ENCODE measurements at regions of chr12 and their contacts with region 1.

Region 1: DNA sequence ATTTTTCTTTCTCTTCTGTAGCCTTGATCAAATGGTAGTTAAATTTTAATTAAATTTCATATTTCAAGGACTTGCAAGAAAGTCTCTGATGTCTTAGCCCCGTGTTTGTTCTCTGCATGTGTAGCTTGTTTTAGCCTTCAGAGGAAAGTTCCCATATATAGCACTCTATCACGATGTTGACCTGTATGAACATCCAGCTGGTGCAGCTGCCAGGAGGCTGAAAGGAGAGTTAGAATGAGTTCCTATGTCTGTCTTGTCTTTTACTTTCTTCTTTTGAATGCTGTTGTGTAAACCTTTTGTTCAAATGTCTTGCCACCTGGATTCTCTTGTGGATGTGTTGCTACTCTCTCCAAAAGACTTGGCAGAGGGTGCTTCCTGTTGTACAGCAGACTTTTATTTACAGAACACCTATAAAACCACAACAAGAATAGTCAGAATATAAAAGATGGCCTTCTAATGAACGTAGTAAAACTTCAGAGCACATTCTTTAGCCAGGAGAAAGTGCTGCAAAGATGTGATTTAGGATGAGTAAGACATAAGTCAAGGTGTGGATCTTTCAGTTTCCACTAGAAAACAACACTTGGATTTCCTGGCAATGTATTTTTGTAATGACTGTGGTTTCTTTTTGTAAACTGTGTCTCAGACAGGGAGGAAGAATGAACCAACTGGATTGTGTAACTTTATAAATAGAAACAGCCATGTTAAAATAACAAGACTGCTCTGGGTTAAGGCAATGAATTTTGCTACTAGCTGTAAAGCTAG is 17.2 kb downstream of the NAV3 start:
- DNase-seq: peak; percentile 92
- H3K4me3 Mint-ChIP-seq: peak overlapping the region; percentile 35
- H3K27ac Mint-ChIP-seq: peak overlapping the region; percentile 89
- H3K4me1 Mint-ChIP-seq: peaks cover 15% of the 10 kb centered on the region
- H3K27me3 Mint-ChIP-seq: no peaks in the 10 kb centered on the region
- CTCF ChIP-seq: no peak

Region 2: DNA sequence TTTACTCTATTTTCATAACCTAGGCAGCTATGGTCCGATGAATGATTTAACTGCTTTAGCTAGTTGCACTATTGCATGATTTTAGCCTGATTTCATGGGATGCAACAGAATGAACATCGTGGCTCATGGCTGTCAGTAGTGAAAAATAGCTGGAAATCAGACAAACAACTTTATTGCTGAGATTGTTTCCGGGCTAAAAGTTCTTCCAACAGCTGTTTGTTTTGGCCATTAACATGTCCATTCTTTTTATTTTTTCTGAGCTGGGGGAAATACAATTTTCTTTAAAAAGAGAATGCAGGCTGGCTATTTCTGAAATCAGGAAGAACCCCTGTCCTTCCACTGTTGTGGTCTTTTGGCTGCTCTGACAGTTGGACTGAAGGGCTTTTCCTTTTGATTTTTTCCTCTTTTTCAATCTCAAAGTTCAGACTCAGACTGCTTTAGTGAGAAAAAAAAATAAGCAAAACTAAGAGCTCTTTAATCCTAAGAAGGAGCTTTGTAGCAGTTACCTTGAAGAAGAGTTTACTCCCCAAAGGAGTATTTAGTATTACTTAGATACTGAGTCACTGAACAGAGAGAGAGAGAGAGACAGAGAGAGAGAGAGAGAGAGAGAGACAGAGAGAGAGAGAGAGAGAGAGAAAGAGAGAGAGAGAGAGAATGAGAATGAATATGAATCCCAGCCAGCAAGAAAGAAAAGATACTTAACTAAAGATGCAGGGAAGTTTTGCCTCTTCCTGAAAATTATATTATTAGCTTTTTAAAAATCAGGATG is 17.1 kb before region 1 on chr12 and contains the start of gene NAV3:
- CTCF ChIA-PET with region 1: no interaction called
- POLR2A ChIA-PET with region 1: no interaction called
- intact Hi-C with region 1: no loop called
- DNase-seq: peak; percentile 16
- H3K4me3 Mint-ChIP-seq: no peak within 1 kb of the TSS
- H3K27ac Mint-ChIP-seq: no peak within 1 kb of the TSS
- H3K4me1 Mint-ChIP-seq: peaks cover 6% of the 10 kb centered on the region
- H3K27me3 Mint-ChIP-seq: no peaks in the 10 kb centered on the region
- CTCF ChIP-seq: no peak
- total RNA-seq, gene NAV3: 7.1 and 8.4 TPM in 2 replicates

Region 3: DNA sequence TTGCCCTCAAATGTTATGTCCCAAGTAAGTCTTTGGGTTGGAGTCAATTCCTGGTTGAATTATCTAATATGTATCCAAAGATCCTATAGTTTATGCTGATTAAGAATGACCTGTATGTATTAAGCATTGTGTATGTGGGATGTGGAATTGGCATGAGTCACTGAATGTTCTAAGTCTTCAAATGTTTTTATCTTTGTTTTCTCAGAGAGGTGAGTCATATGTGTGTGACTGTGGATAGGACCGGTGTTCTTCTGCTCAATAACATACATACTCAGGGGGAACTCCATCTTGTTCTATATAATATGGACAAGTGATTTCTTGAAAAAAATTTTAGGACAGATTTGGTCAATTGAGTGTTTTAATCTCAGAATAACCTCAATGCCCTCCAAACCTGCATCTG is 40.8 kb after region 1 on chr12:
- CTCF ChIA-PET with region 1: no interaction called
- POLR2A ChIA-PET with region 1: no interaction called
- intact Hi-C with region 1: loop called (anchors 2 kb)
- DNase-seq: peak; percentile 83
- H3K4me3 Mint-ChIP-seq: no peak overlapping the region
- H3K27ac Mint-ChIP-seq: peak overlapping the region; percentile 57
- H3K4me1 Mint-ChIP-seq: peaks cover 12% of the 10 kb centered on the region
- H3K27me3 Mint-ChIP-seq: no peaks in the 10 kb centered on the region
- CTCF ChIP-seq: no peak

Region 4: GRCh38 chr12:78062786-78063185 is 214.9 kb after region 1 on chr12:
- CTCF ChIA-PET with region 1: no interaction called
- POLR2A ChIA-PET with region 1: no interaction called
- intact Hi-C with region 1: no loop called
- DNase-seq: peak; percentile 60
- H3K4me3 Mint-ChIP-seq: no peak overlapping the region
- H3K27ac Mint-ChIP-seq: peak overlapping the region; percentile 36
- H3K4me1 Mint-ChIP-seq: peaks cover 11% of the 10 kb centered on the region
- H3K27me3 Mint-ChIP-seq: no peaks in the 10 kb centered on the region
- CTCF ChIP-seq: no peak

Measured in MCF 10A (cell line).